ENCODE measurements at regions of chr20 and their contacts with region 1.

Region 1: DNA sequence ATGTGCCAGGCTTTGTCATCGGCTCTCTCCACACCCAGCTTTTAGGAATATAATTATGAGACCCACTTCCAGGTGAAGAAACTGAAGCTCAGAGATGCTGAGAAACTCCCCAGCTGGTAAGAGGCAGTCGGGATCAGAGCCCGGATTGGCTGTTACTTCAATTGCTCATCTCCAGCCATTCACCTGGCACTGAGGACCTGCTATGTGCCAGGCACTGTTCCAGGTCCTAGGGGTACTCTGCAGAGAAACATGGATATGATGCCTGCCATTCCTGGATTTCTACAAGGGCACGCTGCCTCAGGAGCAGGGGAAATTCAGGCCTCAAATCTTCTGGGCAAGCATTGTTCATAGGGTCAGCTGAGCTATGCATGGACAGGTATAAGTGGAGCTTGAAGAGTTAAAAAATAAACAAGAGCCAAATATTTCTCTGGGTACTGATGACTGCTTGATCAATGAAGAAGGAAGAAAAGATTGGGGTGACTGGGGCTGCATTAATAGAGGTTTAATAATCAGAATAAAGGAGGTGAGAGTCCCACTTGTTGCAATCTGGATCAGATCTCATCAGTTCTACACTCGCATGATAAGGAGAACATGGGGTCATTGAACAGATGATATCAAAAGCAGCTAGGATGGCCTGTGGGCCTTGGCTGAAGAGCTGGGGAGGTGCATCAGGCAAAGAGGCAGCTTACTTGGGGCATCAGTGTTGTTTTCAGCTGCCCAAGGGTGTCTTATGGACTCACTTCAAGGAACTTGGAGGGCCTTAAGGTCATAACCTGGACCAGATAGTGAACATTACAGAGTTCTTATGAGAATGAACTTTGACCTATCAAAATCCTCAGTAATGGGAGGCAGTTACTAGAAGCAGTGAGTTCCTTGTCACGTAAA is 80.9 kb upstream of the TOX2 start:
- DNase-seq: no peak
- H3K4me3 ChIP-seq: no peak overlapping the region
- H3K27ac ChIP-seq: no peak overlapping the region
- H3K4me1 ChIP-seq: no peaks in the 10 kb centered on the region
- H3K27me3 ChIP-seq: no peaks in the 10 kb centered on the region
- CTCF ChIP-seq: no peak
- POLR2A ChIP-seq: no peak

Region 2: GRCh38 chr20:43448748-43449535 is 384.8 kb before region 1 on chr20:
- intact Hi-C with region 1: no loop called
- DNase-seq: peak in 6 of 7 donors; percentile 37 to 66 (median 48)
- H3K4me3 ChIP-seq: no peak overlapping the region
- H3K27ac ChIP-seq: no peak overlapping the region
- H3K4me1 ChIP-seq: no peaks in the 10 kb centered on the region
- H3K27me3 ChIP-seq: no peaks in the 10 kb centered on the region
- CTCF ChIP-seq: peak; percentile 53 to 73 (median 66)
- POLR2A ChIP-seq: no peak

Region 3: DNA sequence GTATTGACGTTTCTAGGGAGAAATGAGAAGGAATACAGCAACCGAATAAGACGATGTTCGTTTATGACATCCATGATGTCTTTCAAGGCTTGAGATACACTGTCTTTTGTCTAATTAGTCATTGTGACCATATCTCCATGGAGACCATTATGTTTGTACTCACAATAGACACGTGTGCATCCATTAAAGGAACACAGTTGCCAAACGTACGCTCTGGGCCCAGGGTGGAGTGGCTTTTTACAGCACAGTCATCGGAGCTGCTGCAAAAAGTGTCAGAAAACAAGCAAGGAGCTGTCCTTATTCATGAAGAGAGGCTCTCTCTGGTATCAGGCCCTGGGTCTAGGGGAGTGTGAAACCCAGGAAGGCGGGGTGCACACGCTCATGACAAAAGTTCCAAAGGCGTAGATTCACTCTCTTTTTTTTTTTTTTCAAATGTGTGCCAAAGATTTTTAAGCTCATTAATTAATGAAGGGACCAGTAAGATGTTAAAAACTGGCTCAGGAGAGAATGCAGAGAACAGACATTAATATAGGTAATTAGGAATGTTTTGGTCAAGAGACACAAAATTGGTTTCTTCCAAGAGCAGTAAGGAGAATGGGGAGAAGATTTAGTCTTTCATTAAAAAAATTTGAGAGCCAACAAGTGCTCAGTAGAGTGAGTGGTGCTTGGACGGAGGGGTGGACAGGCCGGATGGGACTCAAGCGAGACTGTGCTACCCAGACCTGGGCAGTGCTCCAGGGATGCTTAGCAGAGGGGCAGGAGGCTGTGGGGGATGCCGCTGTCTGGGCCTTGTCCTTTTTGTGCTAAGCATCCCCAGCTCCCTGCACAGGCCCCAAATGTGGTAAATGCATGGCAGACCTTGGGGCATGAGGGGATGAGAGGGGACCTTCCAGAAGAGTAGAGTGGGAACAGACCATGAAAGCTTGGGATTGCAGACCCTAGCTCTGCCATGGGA is 72.1 kb before region 1 on chr20:
- intact Hi-C with region 1: loop called in 1 of 2 experiments (anchors 5 kb)
- DNase-seq: peak in 1 of 7 donors; percentile 61
- H3K4me3 ChIP-seq: no peak overlapping the region
- H3K27ac ChIP-seq: no peak overlapping the region
- H3K4me1 ChIP-seq: no peaks in the 10 kb centered on the region
- H3K27me3 ChIP-seq: no peaks in the 10 kb centered on the region
- CTCF ChIP-seq: no peak
- POLR2A ChIP-seq: no peak